Activated naive CD4-positive, alpha-beta T cell treated with anti-CD3 and anti-CD28 coated beads, Interleukin-2, amount 10 ng/mL, durations not matched to agents 7 days and 5 days (primary cell): ENCODE measurements at regions of chr1 and their contacts with region 1.

Region 1: DNA sequence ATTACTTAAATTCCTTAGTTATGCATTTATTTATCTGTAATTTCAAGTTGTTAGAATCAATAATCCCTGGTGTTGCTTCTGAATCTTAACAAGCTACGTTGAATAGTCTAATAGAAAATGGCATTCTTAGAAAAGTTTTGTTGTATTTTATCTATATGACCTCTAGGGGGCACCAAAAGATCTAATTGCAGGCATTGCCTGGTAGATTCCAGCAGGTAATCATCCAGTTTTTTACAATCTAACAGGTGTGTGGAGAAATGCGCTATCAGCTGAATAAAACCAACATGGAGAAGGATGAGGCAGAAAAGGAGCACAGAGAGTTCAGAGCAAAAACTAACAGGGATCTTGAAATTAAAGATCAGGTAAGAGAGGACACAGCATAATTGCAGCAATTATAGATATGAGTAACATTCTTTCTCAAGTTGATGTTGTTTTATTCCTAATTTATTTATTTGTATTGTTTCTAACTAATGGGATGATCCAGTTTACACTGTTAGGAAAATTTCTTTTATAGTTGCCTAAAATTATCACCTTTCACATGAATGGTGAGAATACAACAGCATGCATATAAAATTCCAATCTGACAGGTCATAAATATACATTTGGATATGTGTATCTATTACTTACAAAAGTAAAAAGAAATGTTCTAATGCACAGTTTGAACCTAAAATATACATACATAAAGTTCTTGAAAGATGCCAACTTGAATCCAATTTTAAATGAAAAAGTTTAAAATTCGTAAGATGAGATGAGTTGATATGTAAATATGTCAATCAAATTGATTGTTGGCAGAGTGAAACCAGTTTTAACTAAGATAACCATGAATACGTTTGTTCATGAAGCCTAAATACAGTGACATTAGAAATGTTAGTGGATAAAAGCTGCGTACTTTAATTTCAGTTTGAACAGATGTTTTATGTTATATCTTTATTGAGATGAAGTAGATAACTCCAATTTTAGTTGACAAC is 88.4 kb downstream of the SDCCAG8 start:
- DNase-seq: no peak
- H3K4me3 Mint-ChIP-seq: no peak overlapping the region
- H3K27ac Mint-ChIP-seq: no peak overlapping the region
- H3K4me1 Mint-ChIP-seq: peaks cover 6% of the 10 kb centered on the region
- H3K27me3 Mint-ChIP-seq: no peaks in the 10 kb centered on the region

Region 2: GRCh38 chr1:243378669-243379068 is 34.4 kb after region 1 on chr1:
- CTCF ChIA-PET with region 1: no interaction called
- DNase-seq: no peak
- H3K4me3 Mint-ChIP-seq: no peak overlapping the region
- H3K27ac Mint-ChIP-seq: no peak overlapping the region
- H3K4me1 Mint-ChIP-seq: no peaks in the 10 kb centered on the region
- H3K27me3 Mint-ChIP-seq: no peaks in the 10 kb centered on the region

Region 3: DNA sequence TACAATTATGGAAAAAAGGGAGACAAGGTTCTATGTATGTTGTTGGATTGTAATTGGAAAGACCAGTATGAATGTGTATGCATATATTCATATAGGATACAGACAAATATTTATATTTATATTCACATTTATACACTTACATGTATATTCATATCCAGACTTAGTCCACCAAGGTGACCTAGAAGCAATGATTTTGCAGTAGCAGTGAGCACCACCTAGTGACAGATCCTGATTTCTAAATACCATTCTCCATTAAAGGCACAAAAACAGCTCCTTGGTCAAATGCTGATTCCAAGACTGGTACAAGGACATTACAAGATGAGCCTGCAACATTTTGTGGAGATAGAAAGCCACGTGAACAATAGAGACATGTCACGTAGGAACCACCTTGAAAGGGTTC is 65.0 kb after region 1 on chr1:
- CTCF ChIA-PET with region 1: interaction called, 11 read pairs
- DNase-seq: no peak
- H3K4me3 Mint-ChIP-seq: no peak overlapping the region
- H3K27ac Mint-ChIP-seq: no peak overlapping the region
- H3K4me1 Mint-ChIP-seq: peaks cover 13% of the 10 kb centered on the region
- H3K27me3 Mint-ChIP-seq: no peaks in the 10 kb centered on the region

Region 4: GRCh38 chr1:243471754-243472745 is 127.8 kb after region 1 on chr1:
- CTCF ChIA-PET with region 1: no interaction called
- DNase-seq: no peak
- H3K4me3 Mint-ChIP-seq: no peak overlapping the region
- H3K27ac Mint-ChIP-seq: no peak overlapping the region
- H3K4me1 Mint-ChIP-seq: peaks cover 6% of the 10 kb centered on the region
- H3K27me3 Mint-ChIP-seq: no peaks in the 10 kb centered on the region

Region 5: GRCh38 chr1:243748706-243749283 is 404.5 kb after region 1 on chr1:
- CTCF ChIA-PET with region 1: interaction called, 29 read pairs
- DNase-seq: no peak
- H3K4me3 Mint-ChIP-seq: no peak overlapping the region
- H3K27ac Mint-ChIP-seq: no peak overlapping the region
- H3K4me1 Mint-ChIP-seq: peaks cover 2% of the 10 kb centered on the region
- H3K27me3 Mint-ChIP-seq: no peaks in the 10 kb centered on the region

Region 6: GRCh38 chr1:244272471-244273261 is 928.4 kb after region 1 on chr1:
- CTCF ChIA-PET with region 1: interaction called, 19 read pairs
- DNase-seq: peak; percentile 77
- H3K4me3 Mint-ChIP-seq: no peak overlapping the region
- H3K27ac Mint-ChIP-seq: no peak overlapping the region
- H3K4me1 Mint-ChIP-seq: peaks cover 8% of the 10 kb centered on the region
- H3K27me3 Mint-ChIP-seq: peaks cover 13% of the 10 kb centered on the region